Panc1 (cell line): ENCODE measurements at regions of chr19 and their contacts with region 1.

Region 1: DNA sequence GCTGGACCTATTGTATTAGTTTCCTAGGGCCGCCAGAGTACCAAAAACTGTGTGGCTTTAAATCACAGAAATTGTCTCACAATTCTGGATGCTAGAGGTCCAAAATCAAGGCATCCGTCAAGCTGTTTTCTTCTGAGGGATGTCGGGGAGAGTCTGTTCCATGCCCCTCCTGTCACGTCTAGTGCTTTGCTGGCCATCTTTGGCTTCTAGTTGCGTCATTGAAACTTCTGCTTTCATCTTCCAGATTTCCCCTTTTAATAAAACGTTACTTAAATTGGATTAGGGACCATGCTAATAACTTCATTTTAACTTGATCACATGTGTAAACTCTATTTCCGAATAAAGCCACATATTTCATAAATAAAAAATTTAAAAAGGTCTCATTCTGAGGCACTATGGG is 47.5 kb downstream of the TRPM4 start:
- DNase-seq: no peak
- ATAC-seq: no peak
- H3K4me3 ChIP-seq: no peak overlapping the region
- H3K27ac ChIP-seq: no peak overlapping the region
- H3K4me1 ChIP-seq: no peaks in the 10 kb centered on the region
- H3K27me3 ChIP-seq: no peaks in the 10 kb centered on the region
- CTCF ChIP-seq: no peak

Region 2: GRCh38 chr19:49097455-49098288 is 107.4 kb before region 1 on chr19:
- CTCF ChIA-PET with region 1: interaction called, 4 read pairs
- POLR2A ChIA-PET with region 1: interaction called, 5 read pairs
- in situ Hi-C with region 1: no loop called
- intact Hi-C with region 1: loop called (anchors 5 kb)
- DNase-seq: peak; percentile 65
- ATAC-seq: peak; percentile 88
- H3K4me3 ChIP-seq: no peak overlapping the region
- H3K27ac ChIP-seq: peak overlapping the region; percentile 39; the same call in 1 of the 2 replicates
- H3K4me1 ChIP-seq: peaks cover 6% of the 10 kb centered on the region
- H3K27me3 ChIP-seq: no peaks in the 10 kb centered on the region
- CTCF ChIP-seq: peak; percentile 94